H1 (cell line): ENCODE measurements at regions of chr2 and their contacts with region 1.

Region 1: GRCh38 chr2:714005-714741 is 37.0 kb upstream of the TMEM18 start:
- DNase-seq: peak; percentile 34 to 77
- H3K4me3 ChIP-seq: no peak overlapping the region
- H3K27ac ChIP-seq: no peak overlapping the region
- H3K4me1 ChIP-seq: peaks cover 0 to 10% (median 4%) of the 10 kb centered on the region in 4 experiments; a peak in 4 of 7 replicates
- H3K27me3 ChIP-seq: no peaks in the 10 kb centered on the region
- CTCF ChIP-seq: peak; percentile 76 to 91 (median 87)
- EP300 ChIP-seq: no peak
- POLR2A ChIP-seq: no peak
- RAD21 ChIP-seq: peak; percentile 85 to 91

Region 2: DNA sequence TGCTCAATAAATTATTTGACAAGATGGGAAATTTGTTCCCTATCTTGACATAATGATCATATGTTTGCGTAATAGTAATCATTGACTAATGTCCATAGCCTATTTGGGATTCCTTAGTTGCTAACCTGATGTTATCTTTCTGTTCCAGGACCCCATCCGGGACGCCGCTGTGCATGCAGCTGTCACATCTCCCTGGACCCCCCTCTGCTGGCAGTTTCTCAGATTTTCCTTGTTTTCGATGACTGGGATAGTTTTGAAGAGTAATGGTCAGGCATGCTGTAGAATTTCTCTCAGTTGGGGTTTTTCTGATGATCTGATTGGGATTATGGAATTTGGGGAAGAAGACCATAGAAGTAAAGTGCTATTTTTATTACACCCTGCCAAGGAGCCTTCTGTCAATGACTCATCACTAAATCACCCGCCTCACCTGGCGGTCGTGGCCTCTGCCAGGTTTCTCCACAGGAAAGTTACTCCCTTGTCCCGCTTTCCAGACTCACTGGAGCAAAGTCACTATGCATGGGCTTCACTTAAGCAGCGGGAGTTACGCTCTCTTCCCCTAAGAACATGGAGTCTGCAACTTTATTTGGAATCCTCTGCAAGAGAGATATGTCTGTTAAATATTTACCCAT is 17.1 kb before region 1 on chr2:
- CTCF ChIA-PET with region 1: interaction called, 11 read pairs
- POLR2A ChIA-PET with region 1: no interaction called
- DNase-seq: no peak
- H3K4me3 ChIP-seq: no peak overlapping the region
- H3K27ac ChIP-seq: no peak overlapping the region
- H3K4me1 ChIP-seq: 0 out of 7 replicates have a peak, but pooled peaks cover 0 to 2% (median 0%) of the 10 kb centered on the region in 4 experiments
- H3K27me3 ChIP-seq: no peaks in the 10 kb centered on the region; a peak in 1 of 7 replicates
- CTCF ChIP-seq: peak in 1 of 3 experiments; percentile 25; a peak in 1 of 4 replicates
- EP300 ChIP-seq: no peak
- POLR2A ChIP-seq: no peak
- RAD21 ChIP-seq: peak in 1 of 2 experiments; percentile 35; a peak in 2 of 4 replicates

Region 3: DNA sequence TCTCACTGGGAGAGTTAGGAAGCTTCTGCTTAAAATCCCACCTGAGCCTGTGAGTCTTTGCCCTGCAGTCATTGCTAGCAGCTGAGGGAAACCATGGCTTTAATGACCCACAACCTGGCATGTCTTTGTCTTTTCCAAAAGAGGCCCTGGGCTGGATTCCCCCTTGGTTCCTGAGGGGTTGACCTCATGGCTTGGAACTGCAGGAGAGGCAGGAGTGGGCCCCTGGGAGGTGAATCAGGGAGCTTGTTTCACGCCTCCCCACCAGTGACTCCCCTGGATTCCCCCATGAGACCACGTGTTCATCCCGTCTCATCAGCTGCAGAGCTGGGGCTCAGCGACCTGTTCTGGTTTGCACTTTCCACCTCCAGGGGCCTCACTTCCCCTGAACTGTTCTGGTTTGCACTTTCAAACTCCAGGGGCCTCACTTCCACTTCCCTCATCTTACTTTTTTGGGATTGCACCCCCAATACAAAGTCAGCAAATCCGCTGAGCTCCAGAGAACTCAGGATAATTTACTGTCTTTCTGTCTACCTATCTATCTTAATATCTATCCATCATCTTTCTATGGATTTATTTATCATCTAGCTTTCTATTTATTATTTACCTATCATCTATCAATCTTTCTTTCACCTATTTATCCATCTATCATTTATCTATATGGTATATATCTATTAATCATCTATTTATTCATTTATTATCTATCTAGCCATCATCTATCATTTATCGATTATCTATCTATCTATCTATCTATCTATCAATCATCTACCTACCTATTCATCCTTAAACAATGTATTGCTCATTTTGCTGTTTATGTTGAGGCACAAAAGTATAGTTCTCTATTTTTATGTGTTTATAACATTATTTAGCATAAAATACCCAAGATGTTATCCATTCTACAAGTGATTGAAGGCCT is 21.8 kb after region 1 on chr2:
- CTCF ChIA-PET with region 1: interaction called, 59 read pairs
- POLR2A ChIA-PET with region 1: no interaction called
- DNase-seq: no peak
- H3K4me3 ChIP-seq: no peak overlapping the region
- H3K27ac ChIP-seq: no peak overlapping the region
- H3K4me1 ChIP-seq: peaks cover 0 to 14% (median 7%) of the 10 kb centered on the region in 4 experiments; a peak in 6 of 7 replicates
- H3K27me3 ChIP-seq: no peaks in the 10 kb centered on the region
- CTCF ChIP-seq: peak; percentile 13 to 36 (median 15); a peak in 2 of 4 replicates
- EP300 ChIP-seq: no peak
- POLR2A ChIP-seq: no peak
- RAD21 ChIP-seq: no peak; a peak in 1 of 4 replicates

Region 4: DNA sequence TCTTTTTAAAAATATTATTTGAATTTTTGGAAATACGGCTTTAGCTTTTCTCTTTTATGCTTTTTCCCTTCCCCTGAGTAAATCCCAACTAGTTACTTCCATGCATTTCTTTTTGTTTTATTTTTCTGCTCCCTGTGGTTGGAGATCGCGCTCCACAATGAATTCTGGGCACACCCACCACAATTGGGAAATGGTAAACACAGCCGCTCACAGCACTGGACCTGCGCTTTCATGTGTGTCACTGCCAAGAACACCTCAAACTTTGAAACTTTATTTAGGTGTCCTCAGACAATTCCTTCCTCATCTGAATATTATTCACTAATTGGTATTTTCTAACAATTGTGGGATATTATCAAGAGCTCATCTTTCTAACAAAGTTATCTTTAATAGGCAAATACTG is 45.8 kb after region 1 on chr2:
- CTCF ChIA-PET with region 1: interaction called, 11 read pairs
- POLR2A ChIA-PET with region 1: no interaction called
- DNase-seq: no peak
- H3K4me3 ChIP-seq: no peak overlapping the region
- H3K27ac ChIP-seq: no peak overlapping the region
- H3K4me1 ChIP-seq: peaks cover 0 to 2% (median under 1%) of the 10 kb centered on the region in 4 experiments; a peak in 2 of 7 replicates
- H3K27me3 ChIP-seq: no peaks in the 10 kb centered on the region
- CTCF ChIP-seq: no peak
- EP300 ChIP-seq: no peak
- POLR2A ChIP-seq: no peak
- RAD21 ChIP-seq: no peak

Region 5: GRCh38 chr2:824954-825353 is 110.8 kb after region 1 on chr2:
- CTCF ChIA-PET with region 1: interaction called, 14 read pairs
- POLR2A ChIA-PET with region 1: no interaction called
- DNase-seq: no peak
- H3K4me3 ChIP-seq: no peak overlapping the region
- H3K27ac ChIP-seq: no peak overlapping the region
- H3K4me1 ChIP-seq: peaks cover 0 to 2% (median 0%) of the 10 kb centered on the region in 4 experiments; a peak in 2 of 7 replicates
- H3K27me3 ChIP-seq: peaks cover 0 to 5% (median 2%) of the 10 kb centered on the region in 4 experiments; a peak in 4 of 7 replicates
- CTCF ChIP-seq: no peak
- EP300 ChIP-seq: no peak
- POLR2A ChIP-seq: no peak
- RAD21 ChIP-seq: no peak